ENCODE measurements at regions of chr10 and their contacts with region 1.

Region 1: DNA sequence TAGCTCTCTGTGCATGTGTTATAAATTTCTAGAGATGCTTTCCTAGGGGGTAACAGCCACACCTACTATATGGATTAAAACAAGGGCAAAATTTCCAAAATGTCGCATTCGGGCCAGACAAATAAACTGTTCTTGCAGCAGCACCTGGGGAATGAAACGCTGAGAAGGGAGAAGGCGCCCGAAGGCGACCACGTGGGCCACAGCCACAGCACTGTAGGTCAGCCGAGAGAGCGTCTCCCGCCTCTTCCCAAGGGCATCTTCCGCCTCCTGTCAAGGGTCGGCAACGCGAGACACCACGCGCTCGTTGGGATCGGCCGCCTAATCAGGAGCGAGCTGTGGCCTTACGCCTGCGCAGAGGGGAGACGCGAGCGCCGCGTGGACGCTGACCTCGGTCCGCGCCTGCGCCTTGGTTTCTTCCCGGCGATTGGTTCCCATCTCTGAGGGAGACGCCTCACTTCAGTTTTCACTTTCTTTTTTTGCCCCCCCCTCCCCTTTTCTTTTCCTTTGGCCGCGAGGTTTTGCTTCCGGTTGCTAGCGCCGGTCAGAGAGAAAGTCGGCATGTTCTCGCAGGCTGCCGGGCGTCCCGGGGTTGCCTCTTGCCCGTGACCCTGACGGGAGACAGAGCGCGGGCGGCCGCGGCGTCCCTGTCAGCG is at the start of gene TASOR2:
- DNase-seq: peak; percentile 95 to 97
- ATAC-seq: peak; percentile 95 to 96
- H3K4me3 ChIP-seq: peak within 1 kb of the TSS; percentile 72 to 98 (median 90)
- H3K27ac ChIP-seq: peak within 1 kb of the TSS; percentile 88 to 96 (median 92)
- H3K4me1 ChIP-seq: peaks cover 19 to 24% of the 10 kb centered on the region in 2 donors
- H3K27me3 ChIP-seq: no peaks in the 10 kb centered on the region
- CTCF ChIP-seq: no peak
- POLR2A ChIP-seq: peak; percentile 76 to 79
- total RNA-seq, gene TASOR2: 32.0 to 78.0 (median 50.0) TPM

Region 2: GRCh38 chr10:5446390-5446926 is 238.0 kb before region 1 on chr10:
- in situ Hi-C with region 1: no loop called
- intact Hi-C with region 1: loop called (anchors 1 kb)
- DNase-seq: peak; percentile 86 to 91
- ATAC-seq: peak; percentile 80 to 84
- H3K4me3 ChIP-seq: peak overlapping the region; percentile 38 to 62 (median 54)
- H3K27ac ChIP-seq: peak overlapping the region; percentile 67 to 84 (median 73)
- H3K4me1 ChIP-seq: peaks cover 25 to 32% of the 10 kb centered on the region in 2 donors
- H3K27me3 ChIP-seq: no peaks in the 10 kb centered on the region
- CTCF ChIP-seq: peak in 1 of 5 experiments; percentile 5
- POLR2A ChIP-seq: peak; percentile 75 to 92

Region 3: DNA sequence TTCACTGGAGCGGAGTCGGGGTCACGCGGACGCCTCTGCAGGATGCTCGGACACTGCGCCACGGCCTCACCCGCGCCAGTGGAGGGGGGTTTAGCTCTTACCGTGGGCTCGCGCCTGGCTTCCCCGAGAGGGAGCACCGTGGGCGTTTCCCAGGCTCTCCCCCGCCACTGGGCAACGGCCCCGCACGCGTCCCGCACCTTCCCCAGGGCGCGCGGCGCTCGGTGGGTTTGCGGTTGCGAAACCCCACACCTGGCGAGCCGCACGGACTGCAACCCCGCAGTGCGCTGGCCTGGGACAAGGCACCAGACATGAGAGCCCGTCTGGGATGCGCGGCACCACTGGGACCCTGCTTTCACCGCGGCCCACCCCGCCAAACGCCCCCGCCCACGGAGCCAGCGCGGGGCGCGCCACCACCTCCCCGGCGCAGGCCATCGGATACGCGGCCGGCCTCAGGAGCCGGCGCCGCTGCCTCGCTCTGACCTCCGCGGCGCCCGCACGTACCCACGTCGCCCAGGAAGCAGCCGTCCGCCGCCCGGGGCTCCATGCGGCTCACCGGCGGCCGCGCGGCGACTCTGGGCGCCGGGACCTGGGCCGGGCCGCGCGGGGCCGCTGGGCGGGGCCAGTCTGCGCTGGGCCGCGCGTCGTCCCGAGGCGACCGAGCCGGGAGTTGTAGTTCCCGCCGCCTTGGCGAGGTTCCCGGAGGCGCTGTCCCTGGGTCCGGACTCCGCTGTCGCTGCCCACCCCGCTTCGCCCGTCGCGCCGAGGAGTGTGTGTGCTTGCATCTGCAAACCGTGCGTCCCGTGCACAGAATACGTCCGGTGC is 18.2 kb before region 1 on chr10 and contains the start of gene ASB13:
- in situ Hi-C with region 1: no loop called
- intact Hi-C with region 1: loop called (anchors 1 kb)
- DNase-seq: peak; percentile 17 to 48
- ATAC-seq: peak; percentile 88 to 90
- H3K4me3 ChIP-seq: peak within 1 kb of the TSS; percentile 82 to 91 (median 88)
- H3K27ac ChIP-seq: peak within 1 kb of the TSS; percentile 73 to 84 (median 81)
- H3K4me1 ChIP-seq: peaks cover 13 to 18% of the 10 kb centered on the region in 2 donors
- H3K27me3 ChIP-seq: no peaks in the 10 kb centered on the region
- CTCF ChIP-seq: no peak
- POLR2A ChIP-seq: peak; percentile 47 to 66
- total RNA-seq, gene ASB13: 9.6 to 20.0 (median 14.9) TPM

Region 4: GRCh38 chr10:5813287-5814109 is 129.1 kb after region 1 on chr10 and contains the start of gene GDI2:
- in situ Hi-C with region 1: no loop called
- intact Hi-C with region 1: loop called (anchors 1 kb)
- DNase-seq: peak; percentile 94 to 96
- ATAC-seq: peak; percentile 92 to 96
- H3K4me3 ChIP-seq: peak within 1 kb of the TSS; percentile 85 to 97 (median 90)
- H3K27ac ChIP-seq: peak within 1 kb of the TSS; percentile 91 to 98 (median 98)
- H3K4me1 ChIP-seq: peaks cover 43 to 47% of the 10 kb centered on the region in 2 donors
- H3K27me3 ChIP-seq: no peaks in the 10 kb centered on the region
- CTCF ChIP-seq: peak in 2 of 5 experiments; percentile 15 to 21
- POLR2A ChIP-seq: peak; percentile 89 to 91
- total RNA-seq, gene GDI2: 143 to 197 (median 171) TPM

Region 5: GRCh38 chr10:5873515-5873995 is 189.1 kb after region 1 on chr10:
- in situ Hi-C with region 1: loop called (anchors 10 to 25 kb)
- intact Hi-C with region 1: loop called (anchors 1 kb)
- DNase-seq: peak in 1 of 2 donors; percentile 52
- ATAC-seq: peak; percentile 74 to 84
- H3K4me3 ChIP-seq: no peak overlapping the region
- H3K27ac ChIP-seq: no peak overlapping the region
- H3K4me1 ChIP-seq: peaks cover 0 to 4% of the 10 kb centered on the region in 2 donors
- H3K27me3 ChIP-seq: no peaks in the 10 kb centered on the region
- CTCF ChIP-seq: peak; percentile 49 to 71 (median 69)
- POLR2A ChIP-seq: no peak

Region 6: DNA sequence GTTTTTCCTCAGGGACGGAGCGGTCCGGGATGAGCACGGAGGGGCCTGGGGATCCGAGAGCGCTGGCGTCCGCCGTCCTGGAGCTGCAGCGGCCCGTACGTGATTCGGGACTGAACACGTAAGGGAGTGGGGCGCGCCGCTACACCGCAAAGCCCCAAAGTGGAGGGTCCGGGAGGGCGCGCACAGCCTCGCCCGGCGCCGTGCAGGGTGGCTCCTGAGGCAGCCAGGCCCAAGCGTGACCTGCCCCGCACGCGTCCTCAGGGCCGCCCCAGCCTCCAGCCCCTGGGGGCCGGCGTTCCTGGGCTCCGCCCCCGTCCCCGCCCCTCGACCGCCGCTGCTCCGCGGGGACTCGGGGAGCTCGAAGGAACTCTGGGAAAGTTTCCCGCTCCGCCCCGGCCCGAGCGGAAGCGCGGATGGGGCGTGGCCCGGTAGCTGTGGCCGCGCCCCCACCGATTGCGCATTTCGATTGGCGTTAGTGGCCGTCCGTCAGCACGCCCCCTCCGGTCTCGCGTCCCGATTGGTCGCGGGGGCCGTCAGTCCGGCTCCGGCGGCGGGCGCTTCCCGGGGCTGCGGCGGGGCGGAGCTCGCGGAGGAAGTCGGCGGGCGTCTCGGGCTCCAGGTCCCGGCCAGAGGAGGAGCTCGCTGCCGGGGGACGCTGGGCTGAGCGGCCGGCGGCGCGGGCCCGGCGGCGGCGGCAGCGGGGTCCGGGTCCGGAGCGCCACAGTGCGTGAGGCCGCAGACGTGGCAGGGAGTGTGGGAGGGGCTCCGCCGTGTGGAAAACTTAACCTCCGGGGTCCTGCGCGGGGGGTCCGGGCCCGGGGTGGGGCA is 205.4 kb after region 1 on chr10 and contains the starts of genes ANKRD16 and FBH1:
- in situ Hi-C with region 1: no loop called
- intact Hi-C with region 1: loop called (anchors 5 kb)
- DNase-seq: peak; percentile 98
- ATAC-seq: peak; percentile 87 to 89
- H3K4me3 ChIP-seq: peak within 1 kb of the TSS; percentile 69 to 91 (median 74)
- H3K27ac ChIP-seq: peak within 1 kb of the TSS; percentile 77 to 95 (median 88)
- H3K4me1 ChIP-seq: peaks cover 38 to 46% of the 10 kb centered on the region in 2 donors
- H3K27me3 ChIP-seq: no peaks in the 10 kb centered on the region
- CTCF ChIP-seq: no peak
- POLR2A ChIP-seq: peak; percentile 82 to 87
- total RNA-seq, gene ANKRD16: 1.4 to 5.4 (median 3.8) TPM
- total RNA-seq, gene FBH1: 62.6 to 96.9 (median 68.2) TPM